Activated B cell treated with CpG ODN at 0.5 μM for 24 hours (primary cell): ENCODE measurements at regions of chr21 and their contacts with region 1.

Region 1: DNA sequence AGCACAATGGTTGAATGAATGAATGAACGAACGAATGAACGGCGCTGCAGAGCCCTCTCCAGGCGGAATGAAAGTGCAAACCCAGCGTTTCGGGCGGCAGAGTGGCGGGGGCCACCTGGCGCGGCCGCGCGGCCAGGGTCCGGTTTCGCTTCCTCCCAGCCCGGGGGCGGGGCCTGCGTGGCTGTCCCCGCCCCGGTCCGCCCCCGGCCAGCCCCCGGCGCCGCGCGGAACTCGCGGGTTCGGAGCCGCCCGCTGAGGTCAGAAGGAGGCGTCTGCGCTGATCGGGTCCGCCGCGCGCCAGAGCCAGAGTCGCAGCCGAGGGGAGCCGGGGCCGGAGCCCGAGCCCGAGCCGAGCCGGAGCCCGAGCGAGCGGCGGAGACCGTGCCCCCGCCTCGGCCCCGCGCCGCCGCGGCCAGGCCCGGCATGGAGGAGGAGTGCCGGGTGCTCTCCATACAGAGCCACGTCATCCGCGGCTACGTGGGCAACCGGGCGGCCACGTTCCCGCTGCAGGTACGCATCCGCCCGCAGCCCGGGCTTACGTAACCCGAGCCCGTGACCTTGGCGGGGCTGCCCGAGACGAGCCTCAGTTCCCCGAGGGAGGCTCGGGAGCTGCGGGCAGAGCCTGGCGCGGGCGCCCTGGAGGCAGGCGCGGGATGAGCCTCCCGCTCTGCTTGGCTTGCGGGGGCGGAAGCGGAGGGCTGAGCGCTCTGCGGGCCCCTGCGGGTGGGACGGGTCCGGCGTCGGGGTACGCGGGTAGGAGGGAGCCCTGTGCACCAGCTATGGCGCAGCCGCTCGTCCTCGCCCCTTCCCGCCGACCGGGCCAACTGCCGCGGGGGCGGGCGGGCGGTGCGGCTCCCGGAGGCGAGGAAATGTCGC is at the start of gene PDXK:
- DNase-seq: peak; percentile 93
- ATAC-seq: peak; percentile 80
- H3K4me3 Mint-ChIP-seq: peak within 1 kb of the TSS; percentile 81
- H3K27ac Mint-ChIP-seq: peak within 1 kb of the TSS; percentile 71
- H3K4me1 Mint-ChIP-seq: peaks cover 58% of the 10 kb centered on the region
- H3K27me3 Mint-ChIP-seq: no peaks in the 10 kb centered on the region
- CTCF ChIP-seq: no peak
- total RNA-seq, gene PDXK: 45.2 and 54.2 TPM in 2 replicates

Region 2: GRCh38 chr21:43659136-43660000 is 59.7 kb before region 1 on chr21 and contains the starts of genes HSF2BP and RRP1B:
- CTCF ChIA-PET with region 1: no interaction called
- POLR2A ChIA-PET with region 1: interaction called, 6 read pairs
- intact Hi-C with region 1: loop called (anchors 1 kb)
- DNase-seq: peak; percentile 85
- ATAC-seq: peak; percentile 90
- H3K4me3 Mint-ChIP-seq: peak within 1 kb of the TSS; percentile 93
- H3K27ac Mint-ChIP-seq: peak within 1 kb of the TSS; percentile 87
- H3K4me1 Mint-ChIP-seq: peaks cover 30% of the 10 kb centered on the region
- H3K27me3 Mint-ChIP-seq: peaks cover 3% of the 10 kb centered on the region
- CTCF ChIP-seq: no peak
- total RNA-seq, gene HSF2BP: 0.58 and 0.61 TPM in 2 replicates
- total RNA-seq, gene RRP1B: 29.6 and 32.0 TPM in 2 replicates

Region 3: DNA sequence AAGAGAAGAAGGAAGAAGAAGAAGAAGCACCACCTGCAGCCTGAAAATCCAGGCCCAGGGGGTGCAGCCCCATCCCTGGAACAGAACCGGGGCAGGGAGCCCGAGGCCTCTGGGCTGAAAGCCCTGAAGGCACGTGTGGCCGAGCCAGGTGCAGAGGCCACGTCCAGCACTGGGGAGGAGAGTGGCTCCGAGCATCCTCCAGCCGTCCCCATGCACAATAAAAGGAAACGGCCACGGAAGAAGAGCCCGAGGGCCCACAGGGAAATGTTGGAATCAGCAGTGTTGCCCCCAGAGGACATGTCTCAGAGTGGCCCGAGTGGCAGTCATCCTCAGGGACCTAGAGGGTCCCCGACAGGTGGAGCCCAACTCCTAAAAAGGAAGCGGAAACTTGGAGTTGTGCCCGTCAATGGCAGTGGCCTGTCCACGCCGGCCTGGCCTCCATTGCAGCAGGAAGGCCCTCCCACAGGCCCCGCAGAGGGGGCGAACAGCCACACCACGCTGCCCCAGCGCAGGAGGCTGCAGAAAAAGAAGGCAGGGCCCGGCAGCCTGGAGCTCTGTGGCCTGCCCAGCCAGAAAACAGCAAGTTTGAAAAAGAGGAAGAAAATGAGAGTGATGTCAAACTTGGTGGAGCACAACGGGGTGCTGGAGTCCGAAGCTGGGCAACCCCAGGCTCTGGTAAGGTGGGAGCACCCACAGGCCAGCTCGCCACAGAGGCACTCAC is 31.4 kb before region 1 on chr21:
- CTCF ChIA-PET with region 1: no interaction called
- POLR2A ChIA-PET with region 1: interaction called, 7 read pairs
- intact Hi-C with region 1: loop called (anchors 1 kb)
- DNase-seq: peak; percentile 28
- ATAC-seq: peak; percentile 86
- H3K4me3 Mint-ChIP-seq: no peak overlapping the region
- H3K27ac Mint-ChIP-seq: peak overlapping the region; percentile 56
- H3K4me1 Mint-ChIP-seq: peaks cover 17% of the 10 kb centered on the region
- H3K27me3 Mint-ChIP-seq: no peaks in the 10 kb centered on the region
- CTCF ChIP-seq: no peak

Region 4: DNA sequence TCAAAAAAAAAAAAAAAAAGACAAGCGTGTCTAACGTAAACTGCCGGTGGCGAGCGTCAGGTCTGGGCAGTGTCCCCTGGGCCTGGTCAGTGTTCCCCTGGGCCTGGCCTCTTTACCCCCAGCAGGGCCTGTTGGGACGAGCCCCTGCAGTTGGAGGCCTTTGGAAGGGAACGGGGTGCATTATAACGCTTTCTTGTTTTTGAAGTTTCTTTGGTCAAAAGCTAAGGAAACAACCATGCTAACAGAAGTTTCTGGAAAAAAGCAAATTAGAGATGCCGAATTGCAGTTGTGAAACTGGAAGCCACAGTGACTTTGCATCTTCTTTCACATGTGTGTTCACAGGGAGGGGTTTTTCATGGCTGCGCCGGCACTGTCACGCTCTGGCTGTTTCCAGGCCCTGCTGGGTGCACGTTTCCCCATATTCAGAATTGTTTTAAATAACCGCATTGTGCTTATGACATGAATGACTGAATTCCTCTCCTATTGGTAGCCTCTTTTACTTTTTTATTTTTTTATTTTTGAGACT is 86.2 kb after region 1 on chr21:
- CTCF ChIA-PET with region 1: no interaction called
- POLR2A ChIA-PET with region 1: interaction called, 7 read pairs
- intact Hi-C with region 1: loop called (anchors 1 kb)
- DNase-seq: peak; percentile 69
- ATAC-seq: peak; percentile 97
- H3K4me3 Mint-ChIP-seq: peak overlapping the region; percentile 78
- H3K27ac Mint-ChIP-seq: peak overlapping the region; percentile 95
- H3K4me1 Mint-ChIP-seq: peaks cover 37% of the 10 kb centered on the region
- H3K27me3 Mint-ChIP-seq: peaks cover 2% of the 10 kb centered on the region
- CTCF ChIP-seq: no peak

Region 5: GRCh38 chr21:44939532-44940115 is 1220.5 kb after region 1 on chr21 and contains the start of gene SLX9:
- CTCF ChIA-PET with region 1: no interaction called
- POLR2A ChIA-PET with region 1: no interaction called
- intact Hi-C with region 1: loop called (anchors 10 kb)
- DNase-seq: peak; percentile 80
- ATAC-seq: peak; percentile 92
- H3K4me3 Mint-ChIP-seq: peak within 1 kb of the TSS; percentile 88
- H3K27ac Mint-ChIP-seq: peak within 1 kb of the TSS; percentile 84
- H3K4me1 Mint-ChIP-seq: peaks cover 42% of the 10 kb centered on the region
- H3K27me3 Mint-ChIP-seq: no peaks in the 10 kb centered on the region
- CTCF ChIP-seq: no peak
- total RNA-seq, gene SLX9: 26.0 and 34.7 TPM in 2 replicates